Psoas muscle (tissue), 8 donors: ENCODE measurements at regions of chr4 and their contacts with region 1.

Region 1: DNA sequence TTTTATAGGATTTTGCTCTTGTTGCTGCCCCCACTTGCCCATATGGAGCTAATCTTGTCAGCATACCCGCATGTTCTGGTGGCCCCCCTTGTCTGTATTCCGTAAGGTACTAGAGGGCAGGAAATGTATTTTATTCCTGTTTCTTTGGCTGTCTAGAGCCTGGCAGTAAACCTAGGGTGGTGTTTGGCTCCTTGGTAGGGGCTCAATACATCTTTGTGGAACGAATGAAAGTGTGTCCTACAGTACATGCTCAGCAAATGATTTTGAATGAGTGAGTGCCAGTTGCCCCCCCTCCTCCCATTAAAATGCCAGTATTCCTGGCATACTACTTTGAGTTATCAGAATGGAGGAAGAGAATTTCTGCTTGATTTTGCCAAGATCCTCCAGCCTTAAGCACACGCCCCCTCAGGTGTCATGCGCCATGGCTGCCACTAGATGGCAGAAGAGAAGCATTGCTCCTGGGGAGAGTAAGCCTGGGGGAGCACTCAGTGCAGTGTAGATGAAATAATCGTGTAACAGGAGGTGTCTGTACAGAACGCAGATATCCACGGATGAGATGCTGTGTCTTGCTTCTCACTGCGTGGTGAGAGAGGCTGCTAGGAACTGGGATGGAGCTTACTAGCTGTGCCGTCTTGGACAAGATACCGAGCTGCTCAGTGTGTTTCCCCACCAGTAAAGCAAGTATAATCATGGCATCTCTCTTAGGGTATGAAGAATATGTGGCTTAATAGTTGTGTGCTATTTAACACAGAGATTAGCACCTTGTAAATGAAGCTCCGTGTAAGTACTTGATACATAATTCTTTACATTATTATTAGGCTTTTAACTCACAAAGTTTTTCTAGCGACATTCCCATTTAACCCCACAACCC is 17.2 kb upstream of the RNF212 start:
- DNase-seq: peak; percentile 69 to 78
- ATAC-seq: peak; percentile 94 to 97 (median 96)
- H3K4me3 ChIP-seq: no peak overlapping the region
- H3K27ac ChIP-seq: no peak overlapping the region
- H3K4me1 ChIP-seq: no peaks in the 10 kb centered on the region
- H3K27me3 ChIP-seq: no peaks in the 10 kb centered on the region
- CTCF ChIP-seq: peak; percentile 99

Region 2: DNA sequence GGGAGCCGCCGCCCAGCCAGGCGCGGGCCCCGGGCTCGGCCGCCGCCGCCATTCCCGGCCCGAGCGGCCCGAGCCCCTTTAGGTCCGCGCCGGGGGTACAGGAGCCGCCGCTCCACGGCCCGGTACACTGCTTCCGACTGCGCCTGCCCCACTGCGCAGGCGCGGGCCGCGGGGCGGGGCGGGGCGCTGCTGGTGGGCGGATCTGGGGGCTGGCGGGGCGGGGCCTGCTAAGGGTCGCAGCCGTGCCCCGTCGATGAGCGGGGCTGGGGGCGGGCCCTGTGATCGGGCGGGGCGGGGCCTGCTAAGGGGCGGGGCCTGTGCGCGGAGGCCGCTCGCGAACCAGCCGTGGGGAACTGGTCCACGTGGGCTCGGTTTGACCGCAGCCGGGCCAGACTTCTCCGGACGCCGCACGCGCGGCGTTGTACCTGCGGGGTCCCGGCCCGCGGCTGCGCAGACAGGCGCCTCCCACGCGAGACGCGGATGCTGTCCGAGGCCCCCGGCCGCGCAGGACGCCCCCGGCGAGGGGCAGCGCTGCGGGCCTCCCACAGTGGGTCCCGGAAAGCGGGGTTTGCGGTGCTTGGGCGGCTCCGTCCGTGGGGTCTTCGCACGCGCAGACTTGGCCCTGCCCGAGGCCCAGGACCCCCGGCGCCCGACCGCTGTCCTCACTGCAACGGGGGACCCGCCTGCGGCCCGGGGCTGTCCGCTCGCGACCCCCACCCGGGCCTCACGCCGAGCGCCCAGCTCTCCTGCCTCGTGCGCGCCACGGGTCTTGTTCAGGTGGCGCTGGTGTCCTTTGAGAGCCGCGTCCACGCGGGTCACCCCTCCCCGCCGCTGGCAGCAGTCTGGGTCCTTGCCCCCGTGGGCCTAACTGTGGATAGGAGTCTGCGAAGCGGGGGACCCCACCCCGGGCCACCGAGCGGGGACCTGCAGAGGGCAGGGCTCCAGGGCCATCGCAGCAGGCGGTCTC is 156.8 kb before region 1 on chr4 and contains the start of gene DGKQ:
- intact Hi-C with region 1: no loop called
- DNase-seq: peak; percentile 88 to 93
- ATAC-seq: peak; percentile 99
- H3K4me3 ChIP-seq: peak within 1 kb of the TSS; percentile 83
- H3K27ac ChIP-seq: no peak within 1 kb of the TSS
- H3K4me1 ChIP-seq: peaks cover 18% of the 10 kb centered on the region
- H3K27me3 ChIP-seq: peaks cover 0 to 3% (median 2%) of the 10 kb centered on the region in 3 donors
- CTCF ChIP-seq: no peak
- total RNA-seq, gene DGKQ: 2.8 to 3.9 (median 3.5) TPM

Region 3: DNA sequence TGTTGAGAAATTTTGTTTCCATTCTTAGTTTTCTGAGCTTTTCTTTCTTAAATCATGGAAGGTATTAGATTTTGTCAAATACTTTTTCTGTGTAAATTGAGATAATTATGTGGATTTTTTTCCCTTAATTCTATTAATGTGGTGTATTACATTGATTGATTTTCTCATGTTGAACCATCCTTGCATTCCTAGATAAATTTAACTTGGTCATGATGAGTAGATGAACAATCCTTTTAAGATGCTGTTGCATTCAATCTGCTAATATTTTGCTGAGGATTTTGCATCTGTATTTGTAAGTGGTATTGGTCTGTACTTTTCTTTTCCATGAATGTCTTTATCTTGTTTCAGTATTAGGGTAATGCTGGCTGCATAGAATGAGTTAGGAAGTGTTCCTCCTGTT is 138.7 kb after region 1 on chr4:
- intact Hi-C with region 1: loop called in 1 of 2 experiments (anchors 2 kb)
- DNase-seq: no peak
- ATAC-seq: no peak
- H3K4me3 ChIP-seq: no peak overlapping the region
- H3K27ac ChIP-seq: no peak overlapping the region
- H3K4me1 ChIP-seq: no peaks in the 10 kb centered on the region
- H3K27me3 ChIP-seq: no peaks in the 10 kb centered on the region
- CTCF ChIP-seq: no peak

Region 4: GRCh38 chr4:1512738-1513660 is 382.4 kb after region 1 on chr4:
- intact Hi-C with region 1: no loop called
- DNase-seq: peak; percentile 42 to 62
- ATAC-seq: peak; percentile 55 to 73 (median 70)
- H3K4me3 ChIP-seq: no peak overlapping the region
- H3K27ac ChIP-seq: no peak overlapping the region
- H3K4me1 ChIP-seq: no peaks in the 10 kb centered on the region
- H3K27me3 ChIP-seq: peaks cover 0 to 58% (median 13%) of the 10 kb centered on the region in 3 donors
- CTCF ChIP-seq: peak; percentile 55

Region 5: DNA sequence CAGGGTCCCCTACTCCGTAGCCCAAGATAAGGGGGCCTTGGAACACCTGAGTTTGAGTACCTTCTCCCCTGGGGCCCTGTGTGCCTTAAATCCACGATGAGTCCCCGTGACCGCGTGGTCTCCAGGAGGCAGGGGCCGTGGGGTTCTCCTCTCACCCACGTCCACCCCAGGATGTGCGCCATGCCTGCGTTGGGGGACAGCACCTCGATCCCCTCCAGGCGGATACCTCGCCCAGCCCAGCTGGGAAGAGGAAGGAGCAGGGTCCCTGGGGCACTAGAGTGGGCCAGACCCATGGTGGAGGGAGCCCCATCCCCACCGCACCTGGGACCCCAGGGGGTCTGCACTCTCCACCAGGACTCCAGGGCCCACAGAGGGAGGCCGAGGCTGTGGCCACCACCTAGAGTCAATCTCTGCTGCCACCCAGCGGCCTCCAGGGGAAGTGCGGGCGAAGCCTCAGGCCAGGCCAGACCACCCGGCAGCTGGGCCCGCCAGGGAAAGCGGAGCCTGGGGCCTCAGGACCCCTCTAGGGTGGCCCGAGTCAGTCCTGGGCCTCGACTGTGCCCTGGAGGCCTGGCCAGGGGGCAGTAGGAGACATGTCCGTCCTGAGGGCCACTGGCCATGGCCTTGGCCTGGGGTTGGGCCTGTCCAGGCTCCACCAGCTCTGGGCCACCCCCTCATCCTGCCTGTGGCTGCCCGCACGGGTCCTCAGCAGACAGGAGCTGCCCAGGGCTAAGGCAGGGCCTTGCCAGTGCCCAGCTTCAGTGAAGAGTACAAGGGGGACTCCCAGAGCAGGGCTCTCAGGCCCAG is 498.5 kb after region 1 on chr4:
- intact Hi-C with region 1: loop called in 1 of 2 experiments (anchors 10 kb)
- DNase-seq: peak; percentile 61 to 84
- ATAC-seq: peak; percentile 77 to 87 (median 84)
- H3K4me3 ChIP-seq: no peak overlapping the region
- H3K27ac ChIP-seq: no peak overlapping the region
- H3K4me1 ChIP-seq: no peaks in the 10 kb centered on the region
- H3K27me3 ChIP-seq: no peaks in the 10 kb centered on the region
- CTCF ChIP-seq: peak; percentile 96